Esophagus muscularis mucosa (tissue), 4 donors: ENCODE measurements at regions of chr5 and their contacts with region 1.

Region 1: DNA sequence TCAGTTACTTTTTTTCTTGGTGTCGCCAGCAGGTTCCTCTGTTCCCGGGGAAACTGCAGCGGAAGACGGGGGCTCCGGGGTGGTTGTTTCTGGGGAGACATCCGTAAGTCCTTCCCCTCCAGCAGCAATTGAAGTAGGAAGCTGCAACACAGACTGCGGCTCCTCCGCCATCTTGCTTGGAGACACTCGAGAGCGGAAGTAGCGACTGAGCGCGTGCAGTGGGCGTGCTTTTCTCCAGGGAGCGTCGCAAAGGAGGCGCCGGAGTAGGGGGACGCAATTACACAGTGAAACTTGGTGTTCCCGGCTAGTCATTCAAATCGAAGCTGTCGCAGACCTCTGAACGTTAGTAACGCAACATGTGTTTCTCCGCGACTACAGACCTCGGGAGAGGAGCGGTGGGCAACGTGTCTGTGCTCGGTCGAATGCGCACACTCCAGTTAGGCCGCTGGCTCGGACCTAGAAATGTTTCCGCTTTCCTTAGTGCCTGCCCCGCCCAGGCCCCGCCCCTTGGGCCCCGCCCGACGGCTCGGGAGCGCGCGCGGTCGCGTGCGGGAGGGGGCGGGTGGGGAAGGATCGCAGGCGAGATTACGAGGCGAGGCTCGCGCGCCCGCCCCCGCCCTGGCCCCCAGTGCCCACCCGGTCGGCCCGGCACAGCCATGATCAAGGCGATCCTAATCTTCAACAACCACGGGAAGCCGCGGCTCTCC is at the starts of genes AP3S1 and ATG12:
- DNase-seq: peak; percentile 98
- H3K4me3 ChIP-seq: peak within 1 kb of the TSS; percentile 78 to 95 (median 90)
- H3K27ac ChIP-seq: peak within 1 kb of the TSS; percentile 94 to 99 (median 96)
- H3K4me1 ChIP-seq: peaks cover 45 to 74% (median 67%) of the 10 kb centered on the region in 4 donors
- H3K27me3 ChIP-seq: no peaks in the 10 kb centered on the region
- CTCF ChIP-seq: no peak
- EP300 ChIP-seq: no peak
- POLR2A ChIP-seq: peak; percentile 66
- total RNA-seq, gene AP3S1: 44.2 to 74.2 (median 58.9) TPM
- total RNA-seq, gene ATG12: 26.7 to 45.1 (median 37.8) TPM

Region 2: GRCh38 chr5:115634343-115635132 is 207.0 kb before region 1 on chr5:
- intact Hi-C with region 1: loop called (anchors 2 kb)
- DNase-seq: peak; percentile 97
- H3K4me3 ChIP-seq: peak overlapping the region; percentile 15 to 45 (median 40)
- H3K27ac ChIP-seq: peak overlapping the region; percentile 32 to 65 (median 56)
- H3K4me1 ChIP-seq: peaks cover 5 to 12% (median 6%) of the 10 kb centered on the region in 4 donors
- H3K27me3 ChIP-seq: no peaks in the 10 kb centered on the region
- CTCF ChIP-seq: peak; percentile 83 to 91 (median 90)
- EP300 ChIP-seq: no peak
- POLR2A ChIP-seq: no peak

Region 3: GRCh38 chr5:116068028-116068632 is 226.6 kb after region 1 on chr5:
- intact Hi-C with region 1: loop called (anchors 10 kb)
- DNase-seq: no peak
- H3K4me3 ChIP-seq: no peak overlapping the region
- H3K27ac ChIP-seq: no peak overlapping the region
- H3K4me1 ChIP-seq: no peaks in the 10 kb centered on the region
- H3K27me3 ChIP-seq: peaks cover 0 to 15% (median 0%) of the 10 kb centered on the region in 4 donors
- CTCF ChIP-seq: peak; percentile 71 to 90 (median 81)
- EP300 ChIP-seq: no peak
- POLR2A ChIP-seq: no peak